HEK293 (cell line): ENCODE measurements at regions of chr18 and their contacts with region 1.

Region 1: GRCh38 chr18:59697236-59697932 is at the start of gene CCBE1:
- H3K4me3 ChIP-seq: peak within 1 kb of the TSS; percentile 63
- H3K27ac ChIP-seq: peak within 1 kb of the TSS; percentile 64; the same call in 1 of the 2 replicates
- H3K4me1 ChIP-seq: peaks cover 9% of the 10 kb centered on the region; the same call in 1 of the 2 replicates
- CTCF ChIP-seq: peak; percentile 99

Region 2: DNA sequence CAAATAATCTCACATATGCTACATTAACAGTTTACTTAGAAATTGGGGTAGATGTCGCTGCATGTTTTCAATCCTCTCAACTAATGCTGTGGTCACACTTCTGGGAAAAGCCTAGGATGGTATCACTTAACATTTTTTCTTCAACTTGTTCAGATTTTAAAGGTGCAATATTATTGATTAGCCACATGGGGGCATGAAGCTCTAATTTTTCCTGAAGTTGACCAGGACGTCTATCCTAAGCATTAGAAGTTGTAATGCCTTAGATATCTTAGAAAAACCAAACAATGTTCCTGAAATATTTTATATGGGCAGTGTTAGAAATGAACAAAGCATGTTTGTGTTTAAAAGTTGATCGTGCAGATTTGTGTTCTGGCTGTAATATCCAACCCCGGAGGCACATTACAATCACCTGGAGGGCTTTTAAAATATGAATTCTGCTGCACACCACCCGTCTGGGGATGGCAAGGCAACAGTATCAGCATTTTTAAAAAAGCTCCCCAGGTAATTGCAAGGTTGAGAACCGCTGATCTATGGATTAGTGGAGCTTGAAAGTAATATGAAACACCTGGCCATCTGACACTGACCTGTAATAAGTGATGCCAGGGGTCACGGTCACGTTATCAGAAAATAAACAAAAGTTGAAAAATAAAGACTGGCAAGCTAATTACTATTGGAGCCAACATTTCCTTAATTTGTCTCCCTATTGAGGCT is 237.9 kb before region 1 on chr18:
- CTCF ChIA-PET with region 1: interaction called, 41 read pairs
- POLR2A ChIA-PET with region 1: interaction called, 9 read pairs
- H3K4me3 ChIP-seq: no peak overlapping the region
- H3K27ac ChIP-seq: peak overlapping the region; percentile 43; the same call in 1 of the 2 replicates
- H3K4me1 ChIP-seq: peaks cover 22% of the 10 kb centered on the region
- CTCF ChIP-seq: peak; percentile 41; the same call in 1 of the 2 replicates

Region 3: DNA sequence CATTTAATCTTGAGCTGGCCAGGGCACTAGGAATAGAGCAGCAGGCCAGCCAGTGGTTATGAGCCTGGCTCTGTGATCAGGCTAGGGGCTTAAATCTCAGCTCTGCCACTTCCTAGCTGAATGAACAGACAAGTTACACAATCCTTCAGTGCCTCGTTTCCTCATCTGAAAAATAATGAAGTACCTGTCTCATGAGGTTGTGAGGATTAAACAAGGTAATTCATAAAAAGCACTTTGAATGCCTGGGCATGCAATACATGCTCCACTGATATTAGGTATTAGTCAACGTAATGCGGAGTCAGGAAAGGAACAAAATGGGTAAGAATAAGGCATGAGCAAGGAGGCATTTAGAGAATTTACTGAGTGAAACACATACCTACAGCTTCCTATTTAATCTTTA is 100.3 kb before region 1 on chr18:
- CTCF ChIA-PET with region 1: no interaction called
- POLR2A ChIA-PET with region 1: no interaction called
- H3K4me3 ChIP-seq: no peak overlapping the region
- H3K27ac ChIP-seq: no peak overlapping the region
- H3K4me1 ChIP-seq: no peaks in the 10 kb centered on the region
- CTCF ChIP-seq: no peak

Region 4: DNA sequence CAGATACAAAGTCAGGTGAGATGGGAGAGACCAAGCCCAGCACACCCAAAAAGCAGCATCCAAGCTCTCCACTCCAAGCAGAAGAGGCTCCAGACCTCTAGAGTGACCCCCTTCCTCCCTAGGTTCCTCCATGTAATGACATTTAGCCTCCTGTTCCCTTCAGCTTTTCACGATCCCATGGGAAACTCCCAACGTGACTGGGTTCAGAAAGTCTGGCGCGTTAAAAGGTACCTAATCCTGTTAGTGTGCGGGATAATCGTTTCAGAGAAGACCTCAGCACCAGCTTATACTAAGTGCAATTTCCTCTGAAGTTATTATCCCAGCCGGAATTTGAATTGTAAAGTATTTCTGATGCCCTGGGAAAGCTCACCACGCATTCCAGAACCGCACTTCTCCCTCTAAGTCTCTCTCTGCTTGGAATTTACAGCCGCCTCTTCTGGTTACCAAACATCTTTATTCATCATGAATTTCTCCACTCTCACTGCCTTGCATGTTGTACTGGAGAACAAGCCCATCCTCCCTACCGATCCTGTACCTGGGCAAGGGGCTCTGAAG is 47.0 kb before region 1 on chr18:
- CTCF ChIA-PET with region 1: interaction called, 15 read pairs
- POLR2A ChIA-PET with region 1: no interaction called
- H3K4me3 ChIP-seq: no peak overlapping the region
- H3K27ac ChIP-seq: no peak overlapping the region
- H3K4me1 ChIP-seq: no peaks in the 10 kb centered on the region
- CTCF ChIP-seq: no peak

Region 5: GRCh38 chr18:59672235-59672711 is 25.1 kb before region 1 on chr18:
- CTCF ChIA-PET with region 1: interaction called, 45 read pairs
- POLR2A ChIA-PET with region 1: interaction called, 4 read pairs
- H3K4me3 ChIP-seq: no peak overlapping the region
- H3K27ac ChIP-seq: no peak overlapping the region
- H3K4me1 ChIP-seq: peaks cover 14% of the 10 kb centered on the region; the same call in 1 of the 2 replicates
- CTCF ChIP-seq: no peak

Region 6: GRCh38 chr18:59718108-59718463 is 20.7 kb after region 1 on chr18:
- CTCF ChIA-PET with region 1: interaction called, 11 read pairs
- POLR2A ChIA-PET with region 1: interaction called, 4 read pairs
- H3K4me3 ChIP-seq: no peak overlapping the region
- H3K27ac ChIP-seq: no peak overlapping the region
- H3K4me1 ChIP-seq: no peaks in the 10 kb centered on the region
- CTCF ChIP-seq: no peak

Region 7: DNA sequence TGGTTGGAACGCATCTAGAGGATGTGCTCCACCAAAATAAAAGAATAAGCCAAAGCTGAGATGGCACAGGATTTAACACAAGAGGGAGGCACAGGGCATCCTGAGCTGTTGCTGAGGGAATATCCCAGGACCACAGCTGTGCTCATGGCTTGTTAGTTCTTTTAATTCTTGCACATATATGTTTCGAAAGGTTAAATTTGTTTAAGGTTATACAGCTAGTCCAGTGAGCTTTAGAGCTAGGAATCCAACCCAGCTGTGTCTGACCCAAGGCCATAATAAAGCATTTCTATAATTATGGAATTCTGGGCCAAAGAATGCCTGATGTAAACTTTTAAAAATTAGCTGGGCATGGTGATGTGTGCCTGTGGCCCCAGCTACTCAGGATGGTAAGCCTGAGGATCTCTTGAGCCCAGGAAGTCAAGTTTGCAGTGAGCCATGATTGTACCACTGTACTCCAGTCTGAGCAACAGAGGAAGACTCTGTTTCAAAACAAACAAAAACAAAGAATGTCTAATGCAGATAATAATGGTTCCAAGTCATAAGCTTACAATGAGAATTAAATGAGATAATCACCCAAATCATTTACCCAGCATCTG is 66.3 kb after region 1 on chr18:
- CTCF ChIA-PET with region 1: interaction called, 18 read pairs
- POLR2A ChIA-PET with region 1: no interaction called
- H3K4me3 ChIP-seq: no peak overlapping the region
- H3K27ac ChIP-seq: no peak overlapping the region
- H3K4me1 ChIP-seq: no peaks in the 10 kb centered on the region
- CTCF ChIP-seq: no peak